MCF 10A (cell line): ENCODE measurements at regions of chrX and their contacts with region 1.

Region 1: DNA sequence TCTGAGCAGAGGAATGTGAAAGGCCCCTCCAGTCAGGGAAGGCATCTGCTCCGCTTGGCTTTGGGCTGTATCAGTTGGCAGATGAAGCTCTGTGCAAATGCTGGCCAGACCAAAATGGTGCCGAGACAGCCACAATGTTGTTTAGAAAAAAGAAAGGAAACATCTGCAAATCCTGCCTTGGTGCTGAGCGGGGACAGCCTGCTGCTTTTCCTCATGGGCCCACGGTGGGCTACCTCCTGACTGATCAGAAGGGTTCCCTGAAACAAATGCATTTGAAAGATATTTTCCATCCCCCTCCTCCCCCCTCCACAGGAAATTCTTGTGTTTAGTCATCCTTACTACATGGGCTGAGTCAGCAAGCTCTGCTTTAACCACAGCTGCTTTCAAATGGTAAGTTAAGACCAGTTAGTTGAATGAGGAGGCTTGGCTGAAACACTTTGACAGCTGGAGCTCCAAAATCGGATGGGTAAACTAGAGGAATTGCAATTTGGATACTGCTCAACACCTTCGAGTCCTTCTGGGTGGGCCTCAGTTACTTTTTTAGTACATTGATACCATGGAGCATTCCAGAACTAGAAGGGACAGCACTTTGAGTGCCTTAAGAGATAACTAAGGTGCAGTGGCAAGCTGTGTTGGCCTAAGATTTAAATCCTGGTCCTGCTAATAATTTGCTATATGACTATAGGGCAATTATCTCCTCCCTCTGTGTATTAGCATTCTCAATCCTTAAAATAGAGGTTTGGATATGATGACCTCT is 36.0 kb downstream of the PLAC1 start:
- DNase-seq: peak; percentile 81
- H3K4me3 Mint-ChIP-seq: peak overlapping the region; percentile 14
- H3K27ac Mint-ChIP-seq: no peak overlapping the region
- H3K4me1 Mint-ChIP-seq: peaks cover 24% of the 10 kb centered on the region
- H3K27me3 Mint-ChIP-seq: no peaks in the 10 kb centered on the region
- CTCF ChIP-seq: no peak

Region 2: DNA sequence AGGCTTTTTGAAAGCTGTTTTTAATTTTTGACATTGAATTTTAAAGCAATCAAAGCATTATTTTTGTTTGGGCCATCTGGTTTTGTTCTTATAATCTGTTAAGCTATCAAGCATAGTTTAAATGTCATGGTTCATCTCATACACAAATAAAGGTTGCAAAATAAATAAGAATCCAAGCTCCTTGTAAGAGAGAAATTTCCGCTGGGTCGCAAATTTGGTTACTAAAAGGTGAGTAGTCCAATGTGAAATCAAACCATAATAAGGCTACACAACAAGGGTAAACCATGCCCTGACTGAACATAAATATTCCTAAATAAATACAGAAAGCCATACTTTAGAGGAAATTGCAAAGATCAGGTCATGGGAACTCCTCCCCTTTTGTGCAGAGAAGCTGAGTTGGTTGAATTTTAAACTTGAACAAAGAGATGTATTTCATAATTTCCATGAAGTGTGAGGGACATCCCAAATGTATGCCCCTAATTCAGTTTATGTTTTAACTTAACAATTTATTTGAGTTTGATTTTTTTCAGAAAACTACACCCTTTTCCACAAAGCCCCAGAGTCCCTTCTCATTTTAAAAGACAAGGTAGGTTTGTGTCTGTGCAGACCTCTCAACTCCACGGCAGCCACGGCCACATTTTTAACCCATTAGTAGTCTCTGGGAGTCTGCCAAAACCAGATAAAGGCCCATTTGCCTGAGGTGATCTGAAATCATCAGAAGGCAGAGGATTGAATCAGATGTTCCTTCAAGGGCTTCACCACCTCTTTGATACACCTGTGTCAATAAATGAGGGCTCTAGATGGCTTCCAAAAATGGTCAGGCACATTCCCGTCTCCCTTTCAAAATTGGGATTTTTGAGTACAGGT is 49.2 kb before region 1 on chrX:
- CTCF ChIA-PET with region 1: no interaction called
- POLR2A ChIA-PET with region 1: interaction called, 3 read pairs
- intact Hi-C with region 1: loop called (anchors 1 kb)
- DNase-seq: peak; percentile 52
- H3K4me3 Mint-ChIP-seq: no peak overlapping the region
- H3K27ac Mint-ChIP-seq: peak overlapping the region; percentile 9
- H3K4me1 Mint-ChIP-seq: peaks cover 36% of the 10 kb centered on the region
- H3K27me3 Mint-ChIP-seq: peaks cover 37% of the 10 kb centered on the region
- CTCF ChIP-seq: no peak

Region 3: GRCh38 chrX:134868771-134869495 is 246.7 kb after region 1 on chrX:
- CTCF ChIA-PET with region 1: no interaction called
- POLR2A ChIA-PET with region 1: no interaction called
- intact Hi-C with region 1: no loop called
- DNase-seq: peak; percentile 52
- H3K4me3 Mint-ChIP-seq: no peak overlapping the region
- H3K27ac Mint-ChIP-seq: no peak overlapping the region
- H3K4me1 Mint-ChIP-seq: no peaks in the 10 kb centered on the region
- H3K27me3 Mint-ChIP-seq: peaks cover 71% of the 10 kb centered on the region
- CTCF ChIP-seq: no peak

Region 4: GRCh38 chrX:134925551-134925950 is 303.3 kb after region 1 on chrX:
- CTCF ChIA-PET with region 1: no interaction called
- POLR2A ChIA-PET with region 1: no interaction called
- intact Hi-C with region 1: no loop called
- DNase-seq: no peak
- H3K4me3 Mint-ChIP-seq: no peak overlapping the region
- H3K27ac Mint-ChIP-seq: no peak overlapping the region
- H3K4me1 Mint-ChIP-seq: no peaks in the 10 kb centered on the region
- H3K27me3 Mint-ChIP-seq: peaks cover 13% of the 10 kb centered on the region
- CTCF ChIP-seq: no peak

Region 5: DNA sequence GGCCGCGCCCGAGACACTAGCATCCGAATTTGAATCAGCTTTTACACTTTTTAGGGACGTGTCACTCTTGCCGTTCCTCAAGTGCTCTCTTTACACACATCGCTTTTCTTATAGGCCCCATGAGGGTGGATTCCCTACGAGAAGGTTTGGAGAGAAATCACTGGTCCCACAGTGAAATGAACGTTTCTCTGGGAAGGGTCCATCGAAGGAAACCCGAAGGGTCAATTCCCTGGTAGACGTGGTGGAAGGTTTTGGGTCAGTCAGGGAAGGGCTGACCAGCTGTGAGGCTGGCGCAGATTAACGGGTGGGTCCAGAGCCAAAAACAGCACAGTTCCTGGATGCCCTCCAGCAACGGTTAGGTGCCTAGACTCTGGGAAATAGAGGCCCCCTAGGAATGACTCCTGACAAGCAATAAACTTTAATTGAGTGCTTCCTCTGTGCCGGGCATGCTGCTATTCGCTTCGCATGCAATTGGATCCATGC is 722.9 kb after region 1 on chrX:
- CTCF ChIA-PET with region 1: no interaction called
- POLR2A ChIA-PET with region 1: no interaction called
- intact Hi-C with region 1: no loop called
- DNase-seq: peak; percentile 75
- H3K4me3 Mint-ChIP-seq: peak overlapping the region; percentile 81
- H3K27ac Mint-ChIP-seq: peak overlapping the region; percentile 97
- H3K4me1 Mint-ChIP-seq: no peaks in the 10 kb centered on the region
- H3K27me3 Mint-ChIP-seq: peaks cover 2% of the 10 kb centered on the region
- CTCF ChIP-seq: no peak